A549 (cell line): ENCODE measurements at regions of chr10 and their contacts with region 1.

Region 1: GRCh38 chr10:104353325-104354048 is at the start of gene CFAP58:
- DNase-seq: peak; percentile 85 to 90
- ATAC-seq: peak; percentile 88 to 97
- H3K4me3 ChIP-seq: peak within 1 kb of the TSS; percentile 48
- H3K27ac ChIP-seq: peak within 1 kb of the TSS; percentile 25 to 64; a peak in 4 of 6 replicates
- H3K4me1 ChIP-seq: peaks cover 20% of the 10 kb centered on the region
- CTCF ChIP-seq: peak; percentile 74
- EP300 ChIP-seq: no peak
- POLR2A ChIP-seq: 0 out of 2 replicates have a peak, but pooled peaks have one; percentile 14
- RAD21 ChIP-seq: no peak
- polyA plus RNA-seq, gene CFAP58: 0.16 and 0.22 TPM in 2 replicates

Region 2: GRCh38 chr10:104240078-104240477 is 113.4 kb before region 1 on chr10:
- CTCF ChIA-PET with region 1: no interaction called
- POLR2A ChIA-PET with region 1: no interaction called
- DNase-seq: no peak
- ATAC-seq: no peak
- H3K4me3 ChIP-seq: no peak overlapping the region
- H3K27ac ChIP-seq: no peak overlapping the region
- H3K4me1 ChIP-seq: no peaks in the 10 kb centered on the region
- CTCF ChIP-seq: no peak
- EP300 ChIP-seq: no peak
- POLR2A ChIP-seq: no peak
- RAD21 ChIP-seq: no peak

Region 3: DNA sequence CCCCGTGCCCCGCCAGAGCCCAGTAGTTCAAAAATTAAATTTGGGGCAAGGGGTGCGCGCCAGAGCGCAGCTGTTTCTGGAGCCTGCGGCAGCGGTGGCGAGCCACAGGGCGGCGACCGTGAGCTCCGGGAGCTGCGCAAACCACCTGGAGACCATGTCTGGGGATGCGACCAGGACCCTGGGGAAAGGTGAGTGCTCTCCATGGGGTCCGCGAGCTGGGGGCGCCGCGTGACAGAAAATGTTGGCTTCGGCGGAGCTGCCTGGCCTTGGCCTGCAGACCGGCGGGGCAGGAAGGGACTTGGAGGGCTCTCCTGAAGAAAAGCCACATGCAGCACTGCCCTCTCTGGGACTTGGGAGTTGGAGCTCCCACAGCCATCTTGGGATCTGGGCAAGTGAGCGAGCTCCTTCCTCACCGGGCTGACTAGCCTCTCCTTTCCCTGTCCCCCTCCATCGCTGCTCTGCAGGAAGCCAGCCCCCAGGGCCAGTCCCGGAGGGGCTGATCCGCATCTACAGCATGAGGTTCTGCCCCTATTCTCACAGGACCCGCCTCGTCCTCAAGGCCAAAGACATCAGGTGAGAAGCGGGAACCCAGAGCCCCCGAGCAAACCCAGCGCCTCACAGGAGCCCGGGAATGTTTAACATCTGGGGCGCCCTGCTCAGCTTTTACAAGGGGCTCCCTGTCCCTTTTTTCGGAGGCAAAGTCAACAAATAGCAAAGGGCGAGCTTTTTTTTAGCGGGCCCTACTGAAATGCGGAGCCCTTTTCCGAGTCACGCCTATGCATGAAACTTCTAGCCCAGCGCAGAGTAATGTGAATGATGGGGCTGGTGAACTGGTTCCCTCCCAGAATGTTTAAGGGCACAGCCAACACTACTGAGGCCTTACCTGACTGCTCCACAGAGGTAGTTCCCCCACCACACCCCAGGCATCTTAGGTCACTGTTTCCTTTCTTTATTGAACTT is 78.4 kb before region 1 on chr10:
- CTCF ChIA-PET with region 1: interaction called, 141 read pairs
- POLR2A ChIA-PET with region 1: interaction called, 3 read pairs
- DNase-seq: peak; percentile 57 to 80
- ATAC-seq: peak; percentile 97
- H3K4me3 ChIP-seq: peak overlapping the region; percentile 35
- H3K27ac ChIP-seq: peak overlapping the region; percentile 29 to 76; a peak in 5 of 6 replicates
- H3K4me1 ChIP-seq: peaks cover 5% of the 10 kb centered on the region; the same call in 1 of the 3 replicates
- CTCF ChIP-seq: peak; percentile 83
- EP300 ChIP-seq: no peak
- POLR2A ChIP-seq: no peak
- RAD21 ChIP-seq: peak; percentile 48 to 71; a peak in 4 of 5 replicates

Region 4: DNA sequence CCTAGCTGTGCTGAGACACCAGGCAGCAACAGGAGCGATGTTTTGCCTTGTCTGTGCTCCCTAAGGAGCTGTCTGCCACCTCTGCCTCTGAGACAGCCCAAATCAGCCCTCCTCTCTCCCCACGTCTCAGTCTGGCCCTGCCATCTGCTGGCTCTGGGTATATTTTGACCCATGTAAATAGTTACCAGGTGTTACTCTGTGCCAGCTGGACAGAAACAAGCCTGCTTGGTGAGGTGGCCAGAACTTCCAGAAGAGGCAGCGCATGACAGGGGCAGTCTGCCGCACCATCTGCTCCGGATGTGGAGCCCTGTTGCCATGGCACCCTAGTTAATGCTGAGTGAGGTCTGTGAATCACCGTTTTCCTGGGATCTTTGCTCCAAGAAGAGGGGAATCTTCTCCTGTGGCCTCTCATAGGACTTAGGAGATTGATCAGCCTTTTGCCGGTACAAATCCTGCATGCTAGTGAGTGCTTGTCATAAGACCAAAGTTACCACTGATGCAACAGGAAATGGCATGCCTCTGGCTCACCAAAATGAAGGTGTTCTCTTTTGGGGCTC is 52.7 kb before region 1 on chr10:
- CTCF ChIA-PET with region 1: interaction called, 339 read pairs
- POLR2A ChIA-PET with region 1: interaction called, 3 read pairs
- DNase-seq: peak; percentile 27 to 59
- ATAC-seq: peak; percentile 63
- H3K4me3 ChIP-seq: no peak overlapping the region
- H3K27ac ChIP-seq: peak overlapping the region in 1 of 2 experiments; percentile 45; a peak in 2 of 6 replicates
- H3K4me1 ChIP-seq: peaks cover 10% of the 10 kb centered on the region; the same call in 1 of the 3 replicates
- CTCF ChIP-seq: no peak
- EP300 ChIP-seq: no peak
- POLR2A ChIP-seq: no peak
- RAD21 ChIP-seq: peak in 1 of 2 experiments; percentile 18; a peak in 1 of 5 replicates

Region 5: DNA sequence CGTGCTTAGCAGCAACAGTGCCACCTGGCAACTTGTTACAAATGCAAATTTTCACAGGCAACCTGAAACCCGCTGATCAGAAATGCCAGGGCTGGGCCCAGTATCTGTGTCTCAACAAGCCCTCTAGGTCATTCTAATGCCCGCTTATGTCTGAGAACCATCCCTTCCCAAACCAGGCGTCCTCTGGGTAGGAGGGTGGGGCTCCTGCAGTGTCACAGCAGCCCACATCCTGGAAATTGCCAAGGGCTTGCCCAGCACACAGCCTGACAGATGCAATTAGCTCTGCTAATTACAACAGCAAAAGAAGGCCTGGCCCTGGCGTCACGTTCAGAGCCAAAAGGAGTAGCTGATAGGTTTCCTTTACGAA is 31.1 kb before region 1 on chr10:
- CTCF ChIA-PET with region 1: interaction called, 267 read pairs
- POLR2A ChIA-PET with region 1: no interaction called
- DNase-seq: no peak
- ATAC-seq: no peak
- H3K4me3 ChIP-seq: no peak overlapping the region
- H3K27ac ChIP-seq: peak overlapping the region in 1 of 2 experiments; percentile 27; a peak in 1 of 6 replicates
- H3K4me1 ChIP-seq: peaks cover 37% of the 10 kb centered on the region
- CTCF ChIP-seq: no peak
- EP300 ChIP-seq: no peak
- POLR2A ChIP-seq: no peak
- RAD21 ChIP-seq: no peak

Region 6: DNA sequence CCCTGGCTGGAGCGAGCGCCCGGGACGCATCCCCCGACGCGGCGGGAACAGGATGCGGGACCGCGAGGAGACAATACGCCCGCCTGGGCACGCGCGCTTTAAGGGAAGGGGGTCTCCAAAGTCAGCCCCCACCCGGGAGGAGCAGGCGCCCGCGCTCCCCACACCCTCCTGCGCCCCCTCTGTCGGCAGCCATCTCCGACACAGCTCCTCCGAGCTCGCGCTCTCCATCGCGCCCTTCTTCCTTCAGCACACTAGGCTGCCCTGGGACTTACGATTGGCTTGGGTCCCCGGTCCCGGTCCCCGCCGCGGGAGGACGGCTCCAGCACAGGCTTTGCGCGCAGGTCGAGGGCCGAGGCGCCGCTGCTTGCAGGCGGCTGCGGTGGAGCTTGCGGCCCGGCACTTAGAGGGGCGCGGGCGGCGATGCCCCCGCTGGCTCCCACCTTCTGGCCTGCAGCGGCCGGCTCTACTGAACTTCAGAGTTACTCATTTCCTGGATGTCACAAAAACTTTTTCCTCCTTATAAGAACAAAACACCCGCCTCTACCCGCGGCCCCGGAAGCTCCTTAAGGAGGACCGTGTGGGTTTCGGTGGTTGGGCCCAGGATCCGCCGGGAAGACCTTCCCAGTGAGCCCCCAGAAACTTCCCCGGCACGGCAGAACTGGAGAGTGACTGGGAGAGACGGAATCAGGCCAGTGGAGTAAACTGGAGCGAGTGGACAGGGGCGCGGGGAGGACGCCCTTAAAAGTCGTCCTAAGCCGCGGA is 15.3 kb before region 1 on chr10 and contains the start of gene ITPRIP:
- CTCF ChIA-PET with region 1: interaction called, 67 read pairs
- POLR2A ChIA-PET with region 1: interaction called, 8 read pairs
- DNase-seq: peak; percentile 78 to 81
- ATAC-seq: peak; percentile 84 to 87
- H3K4me3 ChIP-seq: peak within 1 kb of the TSS; percentile 67
- H3K27ac ChIP-seq: peak within 1 kb of the TSS; percentile 85 to 93
- H3K4me1 ChIP-seq: peaks cover 40% of the 10 kb centered on the region
- CTCF ChIP-seq: no peak; the same call in 2 of the 3 replicates
- EP300 ChIP-seq: no peak
- POLR2A ChIP-seq: peak; percentile 58
- RAD21 ChIP-seq: no peak
- polyA plus RNA-seq, gene ITPRIP: 14.8 and 17.4 TPM in 2 replicates